Activated CD4-positive, alpha-beta T cell treated with anti-CD3 and anti-CD28 coated beads for 36 hours (primary cell): ENCODE measurements at regions of chr7 and their contacts with region 1.

Region 1: DNA sequence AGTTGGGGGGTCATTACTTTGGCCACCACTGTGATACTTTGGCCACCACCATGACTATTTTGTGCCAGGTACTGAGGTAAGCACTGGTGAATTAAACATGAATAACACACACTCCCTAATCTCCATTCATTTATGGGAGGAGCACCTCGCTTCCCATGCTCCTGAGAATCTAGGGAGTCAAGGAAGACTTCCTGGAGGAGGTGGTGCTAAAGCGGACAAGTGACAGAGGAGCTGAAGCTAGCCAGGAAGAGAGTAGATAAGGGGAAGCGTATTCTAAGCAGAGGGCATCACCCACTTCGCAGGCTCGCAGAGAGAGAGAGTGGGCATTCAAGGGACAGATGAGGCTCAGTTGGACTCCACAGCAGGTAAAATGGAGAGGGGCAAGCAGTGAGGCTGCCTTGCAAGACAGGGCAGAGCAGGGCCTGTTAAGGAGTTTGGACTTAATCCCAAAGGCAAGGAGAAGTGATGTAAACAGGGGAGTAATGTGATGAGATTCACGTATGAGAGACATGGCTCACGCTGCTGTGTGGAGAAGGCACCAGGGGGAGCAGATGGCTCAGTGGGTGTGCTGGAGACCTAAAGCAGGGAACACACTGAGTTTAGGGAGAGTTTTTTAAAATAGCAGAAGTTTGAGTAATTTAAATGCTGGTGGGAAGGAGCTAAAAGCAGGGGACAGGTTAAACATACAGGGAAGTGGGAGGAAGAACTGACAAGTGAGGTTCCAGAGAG is 21.3 kb upstream of the TMEM248 start:
- DNase-seq: no peak
- ATAC-seq: no peak
- H3K4me3 Mint-ChIP-seq: no peak overlapping the region
- H3K27ac Mint-ChIP-seq: no peak overlapping the region
- H3K4me1 Mint-ChIP-seq: no peaks in the 10 kb centered on the region
- H3K27me3 Mint-ChIP-seq: no peaks in the 10 kb centered on the region

Region 2: DNA sequence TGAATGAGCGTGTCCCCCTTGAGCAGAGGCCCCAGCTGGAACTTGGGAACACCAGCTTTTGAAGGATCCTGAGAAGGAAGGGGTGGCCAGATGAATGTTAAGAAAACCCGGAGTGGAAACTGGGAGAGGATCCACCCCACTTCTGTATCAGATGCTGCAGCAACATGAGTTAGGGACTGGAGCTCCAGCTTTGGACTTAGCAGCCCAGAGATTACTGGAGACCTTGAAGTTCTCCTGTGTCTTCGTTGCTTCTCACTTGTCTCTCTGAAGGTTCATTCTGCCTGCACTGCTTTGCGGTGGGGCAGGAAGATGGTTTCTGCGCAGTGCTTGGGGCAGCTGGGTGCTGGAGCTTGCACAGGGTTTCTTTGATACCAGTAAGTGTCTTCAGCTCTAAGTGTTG is 30.6 kb after region 1 on chr7:
- CTCF ChIA-PET with region 1: interaction called, 3 read pairs
- POLR2A ChIA-PET with region 1: no interaction called
- intact Hi-C with region 1: loop called in 1 of 2 experiments (anchors 2 kb)
- DNase-seq: no peak
- ATAC-seq: no peak
- H3K4me3 Mint-ChIP-seq: no peak overlapping the region
- H3K27ac Mint-ChIP-seq: no peak overlapping the region
- H3K4me1 Mint-ChIP-seq: peaks cover 68% of the 10 kb centered on the region
- H3K27me3 Mint-ChIP-seq: no peaks in the 10 kb centered on the region